CD4-positive, alpha-beta T cell (primary cell): ENCODE measurements at regions of chr14 and their contacts with region 1.

Region 1: GRCh38 chr14:106277503-106277902 is 751.1 kb downstream of the TMEM121 start:
- DNase-seq: peak in 10 of 14 experiments; percentile 19 to 66 (median 32)
- ATAC-seq: peak; percentile 47
- H3K4me3 ChIP-seq: no peak overlapping the region
- H3K4me3 Mint-ChIP-seq: peak overlapping the region; percentile 88
- H3K27ac ChIP-seq: no peak overlapping the region
- H3K27ac Mint-ChIP-seq: peak overlapping the region; percentile 87
- H3K4me1 ChIP-seq: peaks cover 14% of the 10 kb centered on the region
- H3K4me1 Mint-ChIP-seq: peaks cover 41% of the 10 kb centered on the region
- H3K27me3 ChIP-seq: peaks cover 7 to 18% of the 10 kb centered on the region in 2 experiments
- H3K27me3 Mint-ChIP-seq: peaks cover 16% of the 10 kb centered on the region
- CTCF ChIP-seq: peak; percentile 91

Region 2: DNA sequence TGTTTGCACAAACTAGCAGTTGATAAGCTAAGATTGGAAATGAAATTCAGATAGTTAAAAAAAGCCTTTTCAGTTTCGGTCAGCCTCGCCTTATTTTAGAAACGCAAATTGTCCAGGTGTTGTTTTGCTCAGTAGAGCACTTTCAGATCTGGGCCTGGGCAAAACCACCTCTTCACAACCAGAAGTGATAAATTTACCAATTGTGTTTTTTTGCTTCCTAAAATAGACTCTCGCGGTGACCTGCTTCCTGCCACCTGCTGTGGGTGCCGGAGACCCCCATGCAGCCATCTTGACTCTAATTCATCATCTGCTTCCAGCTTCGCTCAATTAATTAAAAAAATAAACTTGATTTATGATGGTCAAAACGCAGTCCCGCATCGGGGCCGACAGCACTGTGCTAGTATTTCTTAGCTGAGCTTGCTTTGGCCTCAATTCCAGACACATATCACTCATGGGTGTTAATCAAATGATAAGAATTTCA is 415.5 kb before region 1 on chr14:
- CTCF ChIA-PET with region 1: no interaction called
- POLR2A ChIA-PET with region 1: no interaction called
- intact Hi-C with region 1: no loop called
- DNase-seq: peak in 3 of 14 experiments; percentile 26 to 55 (median 31)
- ATAC-seq: no peak
- H3K4me3 ChIP-seq: no peak overlapping the region
- H3K4me3 Mint-ChIP-seq: no peak overlapping the region
- H3K27ac ChIP-seq: no peak overlapping the region
- H3K27ac Mint-ChIP-seq: peak overlapping the region; percentile 25
- H3K4me1 ChIP-seq: peaks cover 50% of the 10 kb centered on the region
- H3K4me1 Mint-ChIP-seq: peaks cover 27% of the 10 kb centered on the region
- H3K27me3 ChIP-seq: peaks cover 8 to 12% of the 10 kb centered on the region in 2 experiments
- H3K27me3 Mint-ChIP-seq: peaks cover 12% of the 10 kb centered on the region
- CTCF ChIP-seq: no peak

Region 3: GRCh38 chr14:106109337-106109736 is 168.2 kb before region 1 on chr14:
- CTCF ChIA-PET with region 1: no interaction called
- POLR2A ChIA-PET with region 1: no interaction called
- intact Hi-C with region 1: no loop called
- DNase-seq: no peak
- ATAC-seq: no peak
- H3K4me3 ChIP-seq: no peak overlapping the region
- H3K4me3 Mint-ChIP-seq: no peak overlapping the region
- H3K27ac ChIP-seq: no peak overlapping the region
- H3K27ac Mint-ChIP-seq: no peak overlapping the region
- H3K4me1 ChIP-seq: no peaks in the 10 kb centered on the region
- H3K4me1 Mint-ChIP-seq: no peaks in the 10 kb centered on the region
- H3K27me3 ChIP-seq: peaks cover 0 to 17% of the 10 kb centered on the region in 2 experiments
- H3K27me3 Mint-ChIP-seq: peaks cover 12% of the 10 kb centered on the region
- CTCF ChIP-seq: no peak

Region 4: DNA sequence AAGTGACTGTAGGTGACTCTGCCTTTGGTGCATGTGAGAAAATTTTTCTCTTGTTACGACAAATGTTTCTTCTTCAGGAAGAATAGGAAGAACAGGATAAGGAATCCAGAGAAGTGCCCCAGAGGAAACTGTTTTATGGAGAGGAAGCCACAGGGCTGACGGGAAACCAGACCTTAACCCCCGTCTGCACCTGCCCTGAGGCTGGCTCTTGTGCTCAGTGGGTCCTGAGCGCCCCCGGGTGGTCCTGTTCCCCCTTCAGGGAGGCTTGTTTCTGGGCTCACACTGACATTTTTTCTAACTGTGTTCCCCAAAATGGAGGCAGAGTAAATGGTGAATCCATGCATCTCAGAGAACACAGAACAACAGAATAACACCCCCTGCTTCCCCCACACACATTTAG is 59.3 kb before region 1 on chr14:
- CTCF ChIA-PET with region 1: no interaction called
- POLR2A ChIA-PET with region 1: no interaction called
- intact Hi-C with region 1: no loop called
- DNase-seq: peak in 3 of 14 experiments; percentile 19 to 43 (median 43)
- ATAC-seq: no peak
- H3K4me3 ChIP-seq: no peak overlapping the region
- H3K4me3 Mint-ChIP-seq: no peak overlapping the region
- H3K27ac ChIP-seq: no peak overlapping the region
- H3K27ac Mint-ChIP-seq: no peak overlapping the region
- H3K4me1 ChIP-seq: peaks cover 1% of the 10 kb centered on the region
- H3K4me1 Mint-ChIP-seq: peaks cover 36% of the 10 kb centered on the region
- H3K27me3 ChIP-seq: no peaks in the 10 kb centered on the region
- H3K27me3 Mint-ChIP-seq: no peaks in the 10 kb centered on the region
- CTCF ChIP-seq: no peak

Region 5: DNA sequence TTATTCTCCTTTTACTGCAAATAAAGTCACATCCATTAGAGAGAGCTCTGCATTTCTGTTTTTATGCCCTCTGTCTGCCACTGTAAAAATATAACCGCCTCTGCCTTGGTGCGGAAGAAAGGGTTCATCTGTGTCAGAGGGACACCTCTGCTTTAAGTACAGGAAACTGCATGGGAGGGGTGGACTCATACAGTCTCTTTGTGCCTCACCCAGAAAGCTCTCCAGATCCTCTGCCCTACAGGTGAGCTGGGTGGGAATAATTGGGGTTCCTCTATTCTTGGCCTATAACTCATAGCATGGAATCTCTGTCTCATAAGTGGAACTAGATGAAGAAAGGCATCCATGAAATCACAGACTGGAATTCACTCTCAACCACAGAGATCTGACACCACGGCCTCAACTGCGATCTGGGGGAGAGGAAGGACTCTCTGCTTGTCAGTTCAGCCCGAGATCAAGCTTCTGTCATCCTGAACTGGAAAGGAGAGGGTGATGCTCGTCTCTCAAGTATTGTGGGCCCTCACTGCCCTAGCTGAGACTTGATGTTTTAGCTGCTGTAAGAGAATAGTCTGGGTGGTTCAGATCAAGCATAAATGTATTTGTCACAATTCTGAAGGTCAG is 48.9 kb before region 1 on chr14:
- CTCF ChIA-PET with region 1: no interaction called
- POLR2A ChIA-PET with region 1: interaction called, 4 read pairs
- intact Hi-C with region 1: loop called in 1 of 2 experiments (anchors 1 kb)
- DNase-seq: peak in 11 of 14 experiments; percentile 25 to 77 (median 52)
- ATAC-seq: peak; percentile 96
- H3K4me3 ChIP-seq: peak overlapping the region; percentile 37
- H3K4me3 Mint-ChIP-seq: peak overlapping the region; percentile 82
- H3K27ac ChIP-seq: peak overlapping the region; percentile 57 to 68
- H3K27ac Mint-ChIP-seq: peak overlapping the region; percentile 93
- H3K4me1 ChIP-seq: peaks cover 34% of the 10 kb centered on the region
- H3K4me1 Mint-ChIP-seq: peaks cover 85% of the 10 kb centered on the region
- H3K27me3 ChIP-seq: no peaks in the 10 kb centered on the region
- H3K27me3 Mint-ChIP-seq: peaks cover 5% of the 10 kb centered on the region
- CTCF ChIP-seq: peak; percentile 39